ENCODE measurements at regions of chr5 and their contacts with region 1.

Region 1: DNA sequence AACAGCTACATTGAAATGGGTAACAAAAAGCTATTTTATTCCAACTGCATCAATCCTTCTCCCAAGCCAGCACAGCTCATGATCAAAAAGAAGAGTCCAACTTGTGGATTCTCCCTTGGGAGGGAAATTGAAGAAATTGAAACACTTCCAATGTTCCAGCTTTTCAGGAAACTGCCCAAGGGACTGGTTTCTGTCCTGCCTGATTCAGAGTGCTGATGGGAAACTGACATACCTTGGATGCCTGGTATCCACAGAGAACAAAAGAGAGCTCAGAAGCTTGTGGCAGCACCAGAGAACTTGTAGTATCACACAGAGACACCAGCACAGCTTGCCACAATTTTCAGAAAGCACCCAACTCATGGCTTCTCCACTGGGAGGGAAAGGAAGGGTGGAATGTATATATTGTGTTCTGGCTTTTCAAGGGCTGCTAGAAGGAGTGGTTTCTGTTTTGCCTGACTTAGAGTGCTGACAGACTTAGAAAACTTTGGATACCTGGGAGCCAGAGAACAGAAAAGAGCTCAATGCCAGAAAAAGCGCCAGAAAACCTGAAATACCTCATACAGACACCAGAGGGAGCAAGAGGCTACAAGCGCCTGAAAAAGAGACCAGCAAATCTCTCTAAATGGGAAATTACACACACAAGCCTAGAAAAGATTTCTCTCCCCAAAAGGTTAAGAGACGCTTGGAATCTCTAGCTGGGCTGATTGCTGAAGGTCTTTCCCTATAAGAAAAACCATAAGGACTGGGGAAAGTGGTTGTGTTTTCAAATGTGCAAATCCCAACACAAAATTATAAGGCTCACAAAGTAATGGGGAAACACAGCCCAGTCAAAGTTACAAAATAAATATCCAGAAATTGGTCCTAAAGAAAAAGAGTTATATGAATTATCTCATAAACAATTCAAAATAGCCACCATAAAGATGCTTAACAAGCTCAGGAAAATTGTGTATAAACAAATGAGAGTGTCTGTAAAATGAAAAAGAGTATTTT is 178.8 kb downstream of the SPOCK1 start:
- DNase-seq: peak; percentile 59
- H3K4me3 Mint-ChIP-seq: no peak overlapping the region
- H3K27ac Mint-ChIP-seq: no peak overlapping the region
- H3K4me1 Mint-ChIP-seq: no peaks in the 10 kb centered on the region
- H3K27me3 Mint-ChIP-seq: peaks cover 68% of the 10 kb centered on the region
- CTCF ChIP-seq: peak; percentile 72

Region 2: GRCh38 chr5:136802383-136802782 is 518.0 kb before region 1 on chr5:
- CTCF ChIA-PET with region 1: interaction called, 5 read pairs
- intact Hi-C with region 1: loop called (anchors 10 kb)
- DNase-seq: peak; percentile 44
- H3K4me3 Mint-ChIP-seq: no peak overlapping the region
- H3K27ac Mint-ChIP-seq: no peak overlapping the region
- H3K4me1 Mint-ChIP-seq: no peaks in the 10 kb centered on the region
- H3K27me3 Mint-ChIP-seq: peaks cover 34% of the 10 kb centered on the region
- CTCF ChIP-seq: no peak

Region 3: GRCh38 chr5:137075163-137075970 is 245.0 kb before region 1 on chr5:
- CTCF ChIA-PET with region 1: interaction called, 12 read pairs
- intact Hi-C with region 1: loop called (anchors 10 kb)
- DNase-seq: peak; percentile 96
- H3K4me3 Mint-ChIP-seq: no peak overlapping the region
- H3K27ac Mint-ChIP-seq: no peak overlapping the region
- H3K4me1 Mint-ChIP-seq: peaks cover 61% of the 10 kb centered on the region
- H3K27me3 Mint-ChIP-seq: no peaks in the 10 kb centered on the region
- CTCF ChIP-seq: peak; percentile 87

Region 4: GRCh38 chr5:137220523-137220927 is 99.8 kb before region 1 on chr5:
- CTCF ChIA-PET with region 1: interaction called, 10 read pairs
- intact Hi-C with region 1: no loop called
- DNase-seq: peak; percentile 71
- H3K4me3 Mint-ChIP-seq: no peak overlapping the region
- H3K27ac Mint-ChIP-seq: no peak overlapping the region
- H3K4me1 Mint-ChIP-seq: peaks cover 51% of the 10 kb centered on the region
- H3K27me3 Mint-ChIP-seq: no peaks in the 10 kb centered on the region
- CTCF ChIP-seq: peak; percentile 56

Region 5: GRCh38 chr5:137344723-137345322 is 24.5 kb after region 1 on chr5:
- CTCF ChIA-PET with region 1: interaction called, 10 read pairs
- intact Hi-C with region 1: no loop called
- DNase-seq: peak; percentile 62
- H3K4me3 Mint-ChIP-seq: no peak overlapping the region
- H3K27ac Mint-ChIP-seq: no peak overlapping the region
- H3K4me1 Mint-ChIP-seq: peaks cover 48% of the 10 kb centered on the region
- H3K27me3 Mint-ChIP-seq: peaks cover 7% of the 10 kb centered on the region
- CTCF ChIP-seq: peak; percentile 75

Region 6: DNA sequence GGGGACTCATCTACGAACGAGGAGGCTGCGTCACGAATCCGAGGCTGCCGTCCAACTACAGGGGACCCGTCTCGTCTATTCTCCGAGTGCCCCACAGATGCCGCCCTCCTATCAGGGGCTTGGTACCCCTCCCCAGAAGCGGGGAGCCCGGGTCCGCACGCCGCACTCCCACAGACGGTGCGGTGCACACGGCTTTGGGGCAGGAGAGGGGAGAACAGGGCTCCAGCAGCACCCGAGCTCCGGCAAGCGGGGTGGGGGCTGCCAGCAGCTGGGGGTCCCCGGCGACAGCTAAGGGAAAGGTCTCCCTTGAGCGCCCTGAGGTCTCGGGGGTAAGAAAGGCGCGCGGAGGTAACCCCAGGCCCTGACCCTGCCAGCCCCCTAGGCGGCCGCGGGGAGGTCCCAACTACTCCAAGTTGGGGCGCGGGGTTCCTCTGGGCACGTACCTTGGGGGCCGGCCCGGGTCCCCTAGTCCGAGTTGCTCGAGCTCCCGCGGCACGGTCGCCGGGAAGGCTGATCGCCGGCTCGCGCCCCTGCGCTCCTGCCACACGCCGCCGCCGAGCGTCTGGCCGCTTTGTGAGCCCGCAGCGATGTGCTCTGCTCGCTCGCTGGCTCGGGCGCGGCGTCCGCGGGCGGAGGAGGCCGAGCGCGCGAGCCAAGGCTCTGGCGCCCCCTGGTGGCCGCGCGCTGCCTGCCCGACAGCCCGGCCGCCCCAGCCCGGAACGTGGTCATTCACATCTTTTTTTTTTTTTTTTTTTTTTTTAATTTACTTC is 178.6 kb after region 1 on chr5 and contains the start of gene SPOCK1:
- CTCF ChIA-PET with region 1: interaction called, 20 read pairs
- intact Hi-C with region 1: loop called (anchors 1 kb)
- DNase-seq: peak; percentile 90
- H3K4me3 Mint-ChIP-seq: no peak within 1 kb of the TSS
- H3K27ac Mint-ChIP-seq: no peak within 1 kb of the TSS
- H3K4me1 Mint-ChIP-seq: no peaks in the 10 kb centered on the region
- H3K27me3 Mint-ChIP-seq: peaks cover 48% of the 10 kb centered on the region
- CTCF ChIP-seq: peak; percentile 92
- total RNA-seq, gene SPOCK1: 3.2 and 3.3 TPM in 2 replicates

Region 7: GRCh38 chr5:137605411-137605810 is 285.1 kb after region 1 on chr5:
- CTCF ChIA-PET with region 1: interaction called, 21 read pairs
- intact Hi-C with region 1: loop called (anchors 1 kb)
- DNase-seq: no peak
- H3K4me3 Mint-ChIP-seq: no peak overlapping the region
- H3K27ac Mint-ChIP-seq: no peak overlapping the region
- H3K4me1 Mint-ChIP-seq: no peaks in the 10 kb centered on the region
- H3K27me3 Mint-ChIP-seq: peaks cover 86% of the 10 kb centered on the region
- CTCF ChIP-seq: no peak

Region 8: DNA sequence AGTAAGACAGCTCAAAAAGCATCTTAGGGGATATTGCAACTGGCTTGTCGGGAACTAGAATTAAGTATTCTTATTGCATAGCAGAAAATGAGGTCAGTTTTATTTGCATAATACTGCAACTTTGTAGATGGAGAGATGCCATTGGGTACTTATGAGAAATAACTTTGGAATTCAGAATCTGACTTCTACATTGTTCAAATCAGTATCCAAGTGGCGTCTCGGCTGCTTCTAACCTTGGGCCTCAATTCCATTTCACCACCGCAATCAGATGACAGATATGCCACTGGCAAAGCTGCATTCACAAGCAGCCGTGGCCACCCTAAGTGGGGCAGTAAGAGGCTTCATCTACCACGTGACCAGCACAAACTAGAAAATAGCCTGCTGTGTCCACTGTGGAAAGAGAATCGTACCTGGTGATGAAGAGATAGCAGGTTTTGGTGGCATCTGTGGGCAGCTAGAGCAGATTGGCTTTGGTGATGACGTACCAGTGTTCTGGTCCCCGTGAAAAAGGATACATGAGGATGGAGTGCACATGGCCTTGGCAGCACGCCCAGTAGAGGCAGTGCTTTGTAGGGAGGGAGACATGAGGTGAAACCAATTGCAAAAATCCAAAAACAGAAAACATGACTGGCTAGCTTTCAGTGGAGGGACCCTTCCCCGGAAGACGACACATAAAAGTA is 299.0 kb after region 1 on chr5:
- CTCF ChIA-PET with region 1: no interaction called
- intact Hi-C with region 1: no loop called
- DNase-seq: no peak
- H3K4me3 Mint-ChIP-seq: no peak overlapping the region
- H3K27ac Mint-ChIP-seq: no peak overlapping the region
- H3K4me1 Mint-ChIP-seq: no peaks in the 10 kb centered on the region
- H3K27me3 Mint-ChIP-seq: no peaks in the 10 kb centered on the region
- CTCF ChIP-seq: no peak

Measured in Calu3 (cell line).